ENCODE measurements at regions of chr17 and their contacts with region 1.

Region 1: GRCh38 chr17:30808785-30809286 is 15.7 kb downstream of the CRLF3 start:
- DNase-seq: no peak
- ATAC-seq: no peak
- H3K4me3 ChIP-seq: no peak overlapping the region
- H3K27ac ChIP-seq: no peak overlapping the region
- H3K4me1 ChIP-seq: no peaks in the 10 kb centered on the region
- H3K27me3 ChIP-seq: no peaks in the 10 kb centered on the region
- CTCF ChIP-seq: no peak

Region 2: GRCh38 chr17:30600049-30600829 is 208.6 kb before region 1 on chr17:
- CTCF ChIA-PET with region 1: no interaction called
- POLR2A ChIA-PET with region 1: no interaction called
- in situ Hi-C with region 1: no loop called
- intact Hi-C with region 1: no loop called
- DNase-seq: peak; percentile 35
- ATAC-seq: peak; percentile 99
- H3K4me3 ChIP-seq: peak overlapping the region; percentile 84 to 95
- H3K27ac ChIP-seq: peak overlapping the region; percentile 79
- H3K4me1 ChIP-seq: peaks cover 8% of the 10 kb centered on the region
- H3K27me3 ChIP-seq: no peaks in the 10 kb centered on the region
- CTCF ChIP-seq: peak; percentile 84

Region 3: DNA sequence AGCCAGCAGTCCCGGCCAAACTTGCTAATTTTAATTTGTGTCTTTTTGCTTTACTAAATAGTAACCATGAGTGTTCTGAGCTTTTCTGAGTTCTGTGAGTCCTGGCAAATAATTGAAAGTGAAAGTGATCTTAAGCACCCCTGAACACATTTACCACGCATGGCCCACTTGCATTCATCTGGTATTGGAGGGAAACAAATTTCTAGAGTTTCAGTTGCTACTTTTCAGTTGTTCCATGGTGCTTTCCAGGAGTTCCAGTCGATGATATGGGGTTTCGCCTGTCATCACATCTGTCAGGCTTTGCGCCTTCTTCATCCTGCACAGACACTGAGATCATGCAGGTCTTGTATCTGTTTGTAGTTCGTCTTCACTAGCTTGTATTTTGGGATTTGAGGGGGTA is 28.5 kb before region 1 on chr17:
- CTCF ChIA-PET with region 1: no interaction called
- POLR2A ChIA-PET with region 1: interaction called, 11 read pairs
- in situ Hi-C with region 1: no loop called
- intact Hi-C with region 1: no loop called
- DNase-seq: no peak
- ATAC-seq: no peak
- H3K4me3 ChIP-seq: no peak overlapping the region
- H3K27ac ChIP-seq: no peak overlapping the region
- H3K4me1 ChIP-seq: no peaks in the 10 kb centered on the region
- H3K27me3 ChIP-seq: no peaks in the 10 kb centered on the region
- CTCF ChIP-seq: no peak

Region 4: DNA sequence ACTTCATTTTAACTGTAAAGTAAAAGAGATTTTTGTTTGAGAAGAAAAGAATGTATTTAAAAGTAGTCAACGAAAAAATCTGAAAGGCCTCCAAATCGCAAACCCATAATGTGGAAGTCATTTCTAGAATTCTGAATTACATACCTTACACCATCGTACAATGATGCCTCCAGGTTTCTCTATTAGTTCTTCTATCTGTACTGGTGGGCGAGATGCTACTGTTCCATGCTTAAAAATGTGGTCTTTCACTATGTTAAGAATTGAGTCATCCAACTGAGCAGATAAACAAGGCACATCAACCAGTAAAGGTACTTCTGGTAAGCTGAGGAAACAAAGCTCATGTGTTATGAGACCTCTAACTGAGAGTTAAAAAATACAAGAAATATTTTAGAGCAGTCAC is 12.8 kb before region 1 on chr17:
- CTCF ChIA-PET with region 1: interaction called, 10 read pairs
- POLR2A ChIA-PET with region 1: no interaction called
- in situ Hi-C with region 1: no loop called
- intact Hi-C with region 1: no loop called
- DNase-seq: no peak
- ATAC-seq: no peak
- H3K4me3 ChIP-seq: no peak overlapping the region
- H3K27ac ChIP-seq: no peak overlapping the region
- H3K4me1 ChIP-seq: no peaks in the 10 kb centered on the region
- H3K27me3 ChIP-seq: no peaks in the 10 kb centered on the region
- CTCF ChIP-seq: no peak

Region 5: GRCh38 chr17:30858561-30859245 is 49.9 kb after region 1 on chr17:
- CTCF ChIA-PET with region 1: no interaction called
- POLR2A ChIA-PET with region 1: no interaction called
- in situ Hi-C with region 1: no loop called
- intact Hi-C with region 1: no loop called
- DNase-seq: no peak
- ATAC-seq: no peak
- H3K4me3 ChIP-seq: no peak overlapping the region
- H3K27ac ChIP-seq: no peak overlapping the region
- H3K4me1 ChIP-seq: no peaks in the 10 kb centered on the region
- H3K27me3 ChIP-seq: no peaks in the 10 kb centered on the region
- CTCF ChIP-seq: no peak